ENCODE measurements at regions of chr1 and their contacts with region 1.

Region 1: GRCh38 chr1:179809506-179810366 is 66.6 kb downstream of the FAM163A start:
- DNase-seq: peak; percentile 56
- ATAC-seq: peak; percentile 75
- H3K4me3 ChIP-seq: no peak overlapping the region
- H3K27ac ChIP-seq: no peak overlapping the region
- H3K4me1 ChIP-seq: peaks cover 3 to 20% of the 10 kb centered on the region in 2 experiments; a peak in 3 of 4 replicates
- H3K27me3 ChIP-seq: no peaks in the 10 kb centered on the region
- CTCF ChIP-seq: peak; percentile 79 to 94 (median 89)
- POLR2A ChIP-seq: no peak
- RAD21 ChIP-seq: peak; percentile 74

Region 2: DNA sequence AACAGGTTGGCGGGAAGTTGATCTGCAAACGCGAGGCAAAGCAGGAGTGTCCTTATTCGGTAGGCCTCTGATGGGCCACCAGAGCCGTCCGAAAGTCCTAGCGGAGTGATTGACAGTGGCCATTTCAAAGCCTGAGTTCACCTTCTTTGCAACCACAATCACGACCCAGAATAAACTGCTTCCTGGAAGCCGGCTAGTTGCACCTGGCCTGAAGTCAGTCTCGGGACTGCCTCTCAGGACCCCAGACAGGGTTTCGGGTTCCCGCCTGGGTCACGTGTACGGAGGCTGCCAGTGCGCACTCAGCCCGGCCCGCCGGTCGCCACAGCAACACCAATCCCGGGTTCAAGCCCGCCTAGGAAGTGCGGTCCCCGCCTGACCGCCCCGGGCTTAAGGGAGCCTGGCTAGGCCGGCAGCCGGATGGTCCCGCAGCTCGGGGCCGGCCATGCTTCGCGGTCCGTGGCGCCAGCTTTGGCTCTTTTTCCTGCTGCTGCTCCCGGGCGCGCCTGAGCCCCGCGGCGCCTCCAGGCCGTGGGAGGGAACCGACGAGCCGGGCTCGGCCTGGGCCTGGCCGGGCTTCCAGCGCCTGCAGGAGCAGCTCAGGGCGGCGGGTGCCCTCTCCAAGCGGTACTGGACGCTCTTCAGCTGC is 727.9 kb before region 1 on chr1 and contains the start of gene TOR3A:
- CTCF ChIA-PET with region 1: interaction called, 10 read pairs
- POLR2A ChIA-PET with region 1: no interaction called
- RAD21 ChIA-PET with region 1: interaction called, 3 read pairs
- intact Hi-C with region 1: loop called (anchors 2 kb)
- DNase-seq: peak; percentile 68
- ATAC-seq: peak; percentile 92
- H3K4me3 ChIP-seq: peak within 1 kb of the TSS; percentile 73 to 82
- H3K27ac ChIP-seq: peak within 1 kb of the TSS; percentile 74
- H3K4me1 ChIP-seq: peaks cover 0 to 23% of the 10 kb centered on the region in 2 experiments; a peak in 3 of 4 replicates
- H3K27me3 ChIP-seq: no peaks in the 10 kb centered on the region
- CTCF ChIP-seq: no peak
- POLR2A ChIP-seq: no peak
- RAD21 ChIP-seq: no peak
- total RNA-seq, gene TOR3A: 27.0 TPM

Region 3: GRCh38 chr1:179706339-179706941 is 103.3 kb before region 1 on chr1:
- CTCF ChIA-PET with region 1: interaction called, 479 read pairs
- POLR2A ChIA-PET with region 1: interaction called, 7 read pairs
- RAD21 ChIA-PET with region 1: interaction called, 17 to 22 read pairs
- intact Hi-C with region 1: loop called (anchors 1 kb)
- DNase-seq: peak; percentile 37
- ATAC-seq: peak; percentile 67
- H3K4me3 ChIP-seq: no peak overlapping the region
- H3K27ac ChIP-seq: no peak overlapping the region
- H3K4me1 ChIP-seq: no peaks in the 10 kb centered on the region
- H3K27me3 ChIP-seq: no peaks in the 10 kb centered on the region
- CTCF ChIP-seq: peak; percentile 69 to 88 (median 84)
- POLR2A ChIP-seq: no peak
- RAD21 ChIP-seq: peak; percentile 87

Region 4: DNA sequence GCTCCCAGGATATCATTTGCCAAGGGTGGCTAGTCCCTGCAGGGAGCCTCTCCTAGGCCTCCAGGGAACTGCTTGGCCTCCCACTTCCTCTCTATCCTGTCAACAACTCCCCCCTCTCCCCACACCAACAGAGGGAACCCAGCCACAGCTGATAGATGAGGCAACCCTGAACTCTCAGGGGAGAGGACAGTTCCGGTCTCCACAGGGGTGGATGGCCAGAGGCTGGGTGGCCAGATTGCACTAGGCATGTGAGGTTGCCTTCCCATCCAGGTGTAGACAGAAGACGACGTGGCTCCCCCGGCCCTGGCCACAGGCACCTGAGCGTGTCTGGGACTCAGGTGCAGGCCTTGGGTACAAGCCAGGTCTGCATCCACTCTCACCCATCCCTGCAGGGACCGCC is 14.5 kb after region 1 on chr1:
- CTCF ChIA-PET with region 1: interaction called, 15 read pairs
- POLR2A ChIA-PET with region 1: interaction called, 4 read pairs
- RAD21 ChIA-PET with region 1: no interaction called
- intact Hi-C with region 1: no loop called
- DNase-seq: no peak
- ATAC-seq: no peak
- H3K4me3 ChIP-seq: no peak overlapping the region
- H3K27ac ChIP-seq: no peak overlapping the region
- H3K4me1 ChIP-seq: no peaks in the 10 kb centered on the region
- H3K27me3 ChIP-seq: no peaks in the 10 kb centered on the region
- CTCF ChIP-seq: no peak
- POLR2A ChIP-seq: no peak
- RAD21 ChIP-seq: no peak

Region 5: GRCh38 chr1:179840107-179840506 is 30.4 kb after region 1 on chr1:
- CTCF ChIA-PET with region 1: interaction called, 12 read pairs
- POLR2A ChIA-PET with region 1: no interaction called
- RAD21 ChIA-PET with region 1: no interaction called
- intact Hi-C with region 1: no loop called
- DNase-seq: no peak
- ATAC-seq: no peak
- H3K4me3 ChIP-seq: no peak overlapping the region
- H3K27ac ChIP-seq: no peak overlapping the region
- H3K4me1 ChIP-seq: no peaks in the 10 kb centered on the region
- H3K27me3 ChIP-seq: no peaks in the 10 kb centered on the region
- CTCF ChIP-seq: no peak
- POLR2A ChIP-seq: no peak
- RAD21 ChIP-seq: no peak

Region 6: DNA sequence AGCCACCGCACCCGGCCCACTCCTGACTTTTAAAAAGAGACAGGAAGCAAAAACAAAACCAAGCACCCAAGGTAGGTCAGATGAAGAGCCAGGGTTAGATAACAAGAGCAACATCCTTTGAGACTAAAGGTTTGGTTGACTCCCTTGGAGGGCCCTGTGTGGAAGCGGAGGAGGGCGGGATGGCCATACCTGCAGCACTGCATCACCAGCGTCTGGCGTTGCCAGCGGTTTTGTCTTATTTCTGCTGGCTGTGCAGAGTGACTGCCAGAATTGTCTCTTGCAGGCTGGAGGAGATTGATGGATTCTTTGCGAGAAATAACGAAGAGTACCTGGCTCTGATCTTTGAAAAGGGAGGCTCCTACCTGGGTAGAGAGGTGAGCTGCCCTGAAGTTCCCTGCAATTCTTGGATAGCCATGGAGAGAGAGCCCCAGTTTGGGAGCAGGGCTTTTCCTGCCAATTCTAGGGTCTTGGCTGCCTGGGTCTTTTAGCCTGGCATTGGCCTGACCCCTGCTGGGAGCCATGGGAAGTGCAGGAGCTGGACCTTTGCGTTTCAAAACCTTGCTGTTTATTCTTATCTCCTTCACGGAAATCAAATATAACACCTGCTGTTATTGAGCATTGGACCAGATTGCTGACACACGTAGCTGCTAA is 368.9 kb after region 1 on chr1:
- CTCF ChIA-PET with region 1: interaction called, 37 read pairs
- POLR2A ChIA-PET with region 1: no interaction called
- RAD21 ChIA-PET with region 1: interaction called, 3 to 6 read pairs
- intact Hi-C with region 1: loop called (anchors 1 kb)
- DNase-seq: peak; percentile 3
- ATAC-seq: peak; percentile 67
- H3K4me3 ChIP-seq: no peak overlapping the region
- H3K27ac ChIP-seq: no peak overlapping the region
- H3K4me1 ChIP-seq: no peaks in the 10 kb centered on the region
- H3K27me3 ChIP-seq: no peaks in the 10 kb centered on the region
- CTCF ChIP-seq: peak; percentile 57 to 96 (median 95); a peak in 5 of 6 replicates
- POLR2A ChIP-seq: no peak
- RAD21 ChIP-seq: peak; percentile 90